ENCODE measurements at regions of chr2 and their contacts with region 1.

Region 1: GRCh38 chr2:117785740-117786139 is 28.8 kb upstream of the DDX18 start:
- DNase-seq: peak; percentile 57 to 67
- H3K4me3 ChIP-seq: no peak overlapping the region
- H3K4me3 Mint-ChIP-seq: no peak overlapping the region
- H3K27ac Mint-ChIP-seq: no peak overlapping the region
- H3K4me1 ChIP-seq: no peaks in the 10 kb centered on the region
- H3K4me1 Mint-ChIP-seq: no peaks in the 10 kb centered on the region
- H3K27me3 ChIP-seq: no peaks in the 10 kb centered on the region
- H3K27me3 Mint-ChIP-seq: no peaks in the 10 kb centered on the region
- CTCF ChIP-seq: peak; percentile 64 to 77

Region 2: DNA sequence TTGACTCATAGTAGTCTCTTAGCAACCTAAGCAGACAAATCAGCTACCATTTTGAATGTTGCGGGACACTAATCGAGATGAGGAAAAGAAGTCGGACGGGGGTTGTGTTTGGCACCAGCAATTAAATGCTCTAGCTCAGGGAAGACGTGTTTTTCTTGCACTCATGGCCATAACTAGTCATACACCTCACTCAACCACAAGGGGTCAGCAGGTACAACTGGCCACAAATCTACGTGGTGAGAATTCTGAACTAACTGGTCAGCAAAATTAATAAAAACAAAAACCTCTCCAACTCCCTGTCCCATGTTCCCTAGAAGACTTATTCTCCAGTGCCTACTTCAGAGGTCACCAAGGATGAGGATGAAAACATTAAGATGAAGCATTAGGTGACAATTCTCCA is 1875.5 kb before region 1 on chr2:
- CTCF ChIA-PET with region 1: no interaction called
- POLR2A ChIA-PET with region 1: no interaction called
- intact Hi-C with region 1: loop called (anchors 5 kb)
- DNase-seq: peak; percentile 26 to 31
- H3K4me3 ChIP-seq: no peak overlapping the region
- H3K4me3 Mint-ChIP-seq: no peak overlapping the region
- H3K27ac Mint-ChIP-seq: no peak overlapping the region
- H3K4me1 ChIP-seq: no peaks in the 10 kb centered on the region
- H3K4me1 Mint-ChIP-seq: no peaks in the 10 kb centered on the region
- H3K27me3 ChIP-seq: no peaks in the 10 kb centered on the region
- H3K27me3 Mint-ChIP-seq: peaks cover 6% of the 10 kb centered on the region
- CTCF ChIP-seq: peak; percentile 56 to 62

Region 3: DNA sequence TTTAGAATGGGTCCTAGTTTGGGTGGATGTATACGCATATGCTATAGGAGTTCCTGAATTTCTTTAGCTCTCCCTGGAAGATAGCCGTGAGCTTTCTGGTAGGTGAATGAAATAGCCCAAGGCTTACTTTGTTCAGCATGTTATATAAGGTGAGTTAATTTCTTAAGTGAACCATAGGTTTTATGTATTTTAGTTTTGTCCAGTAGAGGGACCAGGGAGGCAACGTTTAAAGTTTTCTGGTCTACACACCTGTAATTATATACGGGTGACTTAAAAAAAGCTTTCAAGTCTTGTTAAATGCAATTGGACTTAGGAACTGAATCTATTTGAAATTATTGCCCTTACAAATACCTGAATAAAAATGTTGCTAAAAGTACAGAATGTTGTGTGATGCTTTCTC is 373.8 kb before region 1 on chr2:
- CTCF ChIA-PET with region 1: no interaction called
- POLR2A ChIA-PET with region 1: no interaction called
- intact Hi-C with region 1: loop called (anchors 5 kb)
- DNase-seq: peak in 1 of 2 experiments; percentile 9
- H3K4me3 ChIP-seq: no peak overlapping the region
- H3K4me3 Mint-ChIP-seq: no peak overlapping the region
- H3K27ac Mint-ChIP-seq: no peak overlapping the region
- H3K4me1 ChIP-seq: no peaks in the 10 kb centered on the region
- H3K4me1 Mint-ChIP-seq: no peaks in the 10 kb centered on the region
- H3K27me3 ChIP-seq: no peaks in the 10 kb centered on the region
- H3K27me3 Mint-ChIP-seq: peaks cover 7% of the 10 kb centered on the region
- CTCF ChIP-seq: peak; percentile 30 to 36

Region 4: DNA sequence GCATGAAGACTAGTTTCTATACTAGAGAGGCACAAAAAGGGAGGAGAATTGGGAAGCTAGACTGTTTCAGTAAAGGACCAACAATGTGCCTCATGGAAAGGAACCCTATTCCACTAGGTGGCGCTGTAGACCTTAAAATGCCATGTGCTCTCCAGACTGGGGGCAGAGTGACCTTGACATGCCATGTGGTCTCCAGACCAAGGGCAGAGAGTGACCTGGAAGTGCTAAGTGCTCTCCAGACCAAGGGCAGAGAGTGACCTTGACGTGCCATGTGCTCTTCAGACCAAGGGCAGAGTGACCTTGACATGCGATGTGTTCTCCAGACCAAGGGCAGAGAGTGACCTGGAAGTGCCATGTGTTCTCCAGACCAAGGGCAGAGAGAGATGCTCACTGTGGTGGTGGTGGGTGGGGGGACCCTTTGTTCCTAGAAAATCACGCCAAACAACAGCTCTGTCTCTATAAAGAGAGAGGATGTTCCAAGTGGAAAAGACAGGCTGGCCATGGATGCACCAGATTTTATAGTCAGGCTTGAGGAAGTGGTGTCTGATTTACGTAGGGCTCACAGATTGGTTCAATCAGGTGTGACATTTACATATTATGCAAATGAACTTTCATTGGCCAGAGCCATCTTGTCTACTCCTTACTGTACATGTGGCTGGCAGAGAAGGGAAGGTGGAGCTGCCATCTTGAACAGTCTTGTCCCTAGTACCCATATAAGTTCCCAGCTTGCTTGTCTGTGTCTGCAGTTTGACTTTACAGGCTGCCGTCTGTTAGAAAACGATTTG is 315.2 kb before region 1 on chr2:
- CTCF ChIA-PET with region 1: interaction called, 5 read pairs
- POLR2A ChIA-PET with region 1: no interaction called
- intact Hi-C with region 1: loop called (anchors 1 kb)
- DNase-seq: peak; percentile 54 to 64
- H3K4me3 ChIP-seq: no peak overlapping the region
- H3K4me3 Mint-ChIP-seq: no peak overlapping the region
- H3K27ac Mint-ChIP-seq: no peak overlapping the region
- H3K4me1 ChIP-seq: no peaks in the 10 kb centered on the region
- H3K4me1 Mint-ChIP-seq: no peaks in the 10 kb centered on the region
- H3K27me3 ChIP-seq: no peaks in the 10 kb centered on the region
- H3K27me3 Mint-ChIP-seq: peaks cover 6% of the 10 kb centered on the region
- CTCF ChIP-seq: peak; percentile 58 to 72

Region 5: DNA sequence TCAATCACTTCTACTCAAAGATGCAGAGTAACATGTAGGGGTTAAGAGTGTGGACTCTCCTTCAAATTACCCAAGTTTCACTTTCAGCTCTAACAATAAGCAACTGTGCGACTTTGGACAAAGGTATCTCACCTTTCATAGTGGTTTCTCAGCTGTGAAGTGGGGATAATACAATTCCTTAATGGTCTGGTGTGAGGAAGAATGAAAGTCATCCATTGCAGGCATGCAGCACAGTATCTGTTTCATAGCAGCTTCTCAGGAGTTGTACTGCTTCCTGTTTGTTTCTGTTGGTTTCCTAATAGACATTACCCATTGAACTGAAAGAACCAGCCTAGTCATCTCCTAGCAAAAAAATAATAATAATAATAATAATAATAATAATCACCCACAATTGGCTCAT is 103.2 kb after region 1 on chr2:
- CTCF ChIA-PET with region 1: no interaction called
- POLR2A ChIA-PET with region 1: no interaction called
- intact Hi-C with region 1: no loop called
- DNase-seq: no peak
- H3K4me3 ChIP-seq: no peak overlapping the region
- H3K4me3 Mint-ChIP-seq: no peak overlapping the region
- H3K27ac Mint-ChIP-seq: no peak overlapping the region
- H3K4me1 ChIP-seq: no peaks in the 10 kb centered on the region
- H3K4me1 Mint-ChIP-seq: no peaks in the 10 kb centered on the region
- H3K27me3 ChIP-seq: no peaks in the 10 kb centered on the region
- H3K27me3 Mint-ChIP-seq: peaks cover 17% of the 10 kb centered on the region
- CTCF ChIP-seq: no peak

Region 6: DNA sequence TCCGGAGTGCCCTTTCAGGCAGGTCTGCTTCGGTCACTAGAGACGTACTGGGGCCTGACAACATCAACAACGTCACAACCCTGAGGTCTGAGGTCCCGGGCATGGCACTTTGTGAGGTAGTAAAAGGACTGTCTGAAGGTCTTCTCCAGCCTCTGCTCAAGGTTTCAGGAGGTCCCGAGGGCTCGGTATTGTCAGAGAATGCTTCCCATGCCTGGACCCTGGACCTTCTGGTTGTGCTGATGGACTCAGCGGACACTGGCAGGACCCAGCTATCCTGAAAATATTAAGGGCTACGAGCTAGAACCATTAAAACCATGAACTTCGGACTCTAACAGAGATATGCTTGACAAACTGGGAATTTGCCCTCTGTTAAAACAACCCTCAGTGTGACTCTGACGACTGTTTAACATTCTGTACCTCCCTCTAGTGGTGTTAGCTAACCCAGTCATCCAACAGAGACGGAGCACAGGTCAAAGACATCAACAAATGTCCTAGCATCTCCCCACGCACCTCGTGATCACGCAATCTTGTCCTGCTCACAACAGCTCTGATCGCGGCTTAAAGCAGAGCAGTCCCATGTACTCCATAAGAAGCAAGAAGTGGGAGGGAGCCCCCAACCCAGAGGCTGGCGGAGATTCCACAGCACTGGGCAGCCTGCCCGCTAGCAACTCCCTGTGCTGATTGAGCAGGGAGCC is 131.6 kb after region 1 on chr2:
- CTCF ChIA-PET with region 1: no interaction called
- POLR2A ChIA-PET with region 1: no interaction called
- intact Hi-C with region 1: loop called (anchors 1 kb)
- DNase-seq: peak; percentile 42 to 51
- H3K4me3 ChIP-seq: no peak overlapping the region
- H3K4me3 Mint-ChIP-seq: no peak overlapping the region
- H3K27ac Mint-ChIP-seq: no peak overlapping the region
- H3K4me1 ChIP-seq: peaks cover 3% of the 10 kb centered on the region; the same call in 1 of the 2 replicates
- H3K4me1 Mint-ChIP-seq: no peaks in the 10 kb centered on the region
- H3K27me3 ChIP-seq: no peaks in the 10 kb centered on the region
- H3K27me3 Mint-ChIP-seq: no peaks in the 10 kb centered on the region
- CTCF ChIP-seq: peak; percentile 45 to 80

Region 7: GRCh38 chr2:117931978-117932377 is 146.2 kb after region 1 on chr2:
- CTCF ChIA-PET with region 1: no interaction called
- POLR2A ChIA-PET with region 1: no interaction called
- intact Hi-C with region 1: no loop called
- DNase-seq: no peak
- H3K4me3 ChIP-seq: no peak overlapping the region
- H3K4me3 Mint-ChIP-seq: no peak overlapping the region
- H3K27ac Mint-ChIP-seq: no peak overlapping the region
- H3K4me1 ChIP-seq: no peaks in the 10 kb centered on the region
- H3K4me1 Mint-ChIP-seq: no peaks in the 10 kb centered on the region
- H3K27me3 ChIP-seq: no peaks in the 10 kb centered on the region
- H3K27me3 Mint-ChIP-seq: no peaks in the 10 kb centered on the region
- CTCF ChIP-seq: no peak

Measured in Caco-2 (cell line).